Endothelial cell of umbilical vein (primary cell): ENCODE measurements at regions of chr6 and their contacts with region 1.

Region 1: GRCh38 chr6:27608916-27609883 is 136.3 kb upstream of the ZNF184 start:
- DNase-seq: peak; percentile 63
- H3K4me3 ChIP-seq: no peak overlapping the region
- H3K27ac ChIP-seq: no peak overlapping the region
- H3K4me1 ChIP-seq: no peaks in the 10 kb centered on the region
- H3K27me3 ChIP-seq: no peaks in the 10 kb centered on the region
- CTCF ChIP-seq: peak; percentile 74 to 79
- POLR2A ChIP-seq: no peak

Region 2: GRCh38 chr6:27157459-27158315 is 451.5 kb before region 1 on chr6:
- CTCF ChIA-PET with region 1: interaction called, 17 read pairs
- POLR2A ChIA-PET with region 1: no interaction called
- dilution Hi-C with region 1: no loop called
- intact Hi-C with region 1: no loop called
- DNase-seq: peak; percentile 57
- H3K4me3 ChIP-seq: peak overlapping the region; percentile 30 to 64 (median 59)
- H3K27ac ChIP-seq: no peak overlapping the region
- H3K4me1 ChIP-seq: peaks cover 10% of the 10 kb centered on the region
- H3K27me3 ChIP-seq: peaks cover 8 to 11% of the 10 kb centered on the region in 2 experiments
- CTCF ChIP-seq: peak; percentile 42 to 63
- POLR2A ChIP-seq: no peak

Region 3: DNA sequence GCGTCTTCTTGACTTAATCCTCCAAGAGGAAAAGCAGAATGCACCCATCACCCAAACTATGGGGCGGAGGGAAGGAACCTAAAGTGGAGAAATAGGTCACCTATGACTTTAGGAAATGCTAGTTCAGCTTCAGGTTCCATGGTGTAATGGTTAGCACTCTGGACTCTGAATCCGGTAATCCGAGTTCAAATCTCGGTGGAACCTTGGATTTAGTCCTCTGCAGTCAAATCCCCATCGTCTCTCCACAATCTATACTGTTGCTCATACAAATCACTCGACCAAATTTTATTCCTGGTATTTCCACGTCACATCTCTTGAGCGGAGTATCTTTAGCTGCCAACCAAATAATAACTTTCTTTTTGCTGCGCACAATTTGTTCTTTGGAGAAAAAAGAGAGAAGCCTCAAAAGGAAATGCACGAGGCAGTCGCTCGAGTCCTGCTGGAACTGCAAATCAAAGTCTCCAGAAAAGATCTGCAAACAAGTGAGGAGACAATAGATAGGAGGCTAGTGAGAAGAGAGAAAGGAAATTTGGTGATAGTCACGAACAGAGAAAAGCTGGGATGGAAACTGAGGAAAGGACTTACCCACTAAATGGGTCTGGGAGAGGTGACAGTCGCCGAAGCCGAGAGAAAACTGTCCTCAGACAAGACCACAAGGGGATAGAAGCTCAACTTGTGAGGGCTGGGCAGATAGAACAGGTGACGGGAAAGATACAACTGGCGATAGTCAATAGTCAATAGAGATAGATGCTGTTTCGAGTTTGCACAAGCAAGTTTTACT is 313.7 kb before region 1 on chr6:
- CTCF ChIA-PET with region 1: interaction called, 11 read pairs
- POLR2A ChIA-PET with region 1: no interaction called
- dilution Hi-C with region 1: no loop called
- intact Hi-C with region 1: no loop called
- DNase-seq: peak; percentile 37
- H3K4me3 ChIP-seq: peak overlapping the region; percentile 18 to 80 (median 72)
- H3K27ac ChIP-seq: no peak overlapping the region
- H3K4me1 ChIP-seq: peaks cover 17% of the 10 kb centered on the region
- H3K27me3 ChIP-seq: peaks cover 16 to 20% of the 10 kb centered on the region in 2 experiments
- CTCF ChIP-seq: no peak
- POLR2A ChIP-seq: no peak

Region 4: GRCh38 chr6:27503436-27504030 is 105.7 kb before region 1 on chr6:
- CTCF ChIA-PET with region 1: interaction called, 5 read pairs
- POLR2A ChIA-PET with region 1: no interaction called
- dilution Hi-C with region 1: no loop called
- intact Hi-C with region 1: loop called (anchors 5 kb)
- DNase-seq: peak; percentile 83
- H3K4me3 ChIP-seq: peak overlapping the region; percentile 38 to 97 (median 95)
- H3K27ac ChIP-seq: peak overlapping the region; percentile 15
- H3K4me1 ChIP-seq: peaks cover 14% of the 10 kb centered on the region
- H3K27me3 ChIP-seq: peaks cover 5 to 11% of the 10 kb centered on the region in 2 experiments
- CTCF ChIP-seq: no peak
- POLR2A ChIP-seq: no peak

Region 5: GRCh38 chr6:27565821-27566766 is 43.1 kb before region 1 on chr6:
- CTCF ChIA-PET with region 1: no interaction called
- POLR2A ChIA-PET with region 1: no interaction called
- dilution Hi-C with region 1: no loop called
- intact Hi-C with region 1: no loop called
- DNase-seq: no peak
- H3K4me3 ChIP-seq: no peak overlapping the region
- H3K27ac ChIP-seq: no peak overlapping the region
- H3K4me1 ChIP-seq: no peaks in the 10 kb centered on the region
- H3K27me3 ChIP-seq: peaks cover 25 to 38% of the 10 kb centered on the region in 2 experiments
- CTCF ChIP-seq: no peak
- POLR2A ChIP-seq: no peak

Region 6: DNA sequence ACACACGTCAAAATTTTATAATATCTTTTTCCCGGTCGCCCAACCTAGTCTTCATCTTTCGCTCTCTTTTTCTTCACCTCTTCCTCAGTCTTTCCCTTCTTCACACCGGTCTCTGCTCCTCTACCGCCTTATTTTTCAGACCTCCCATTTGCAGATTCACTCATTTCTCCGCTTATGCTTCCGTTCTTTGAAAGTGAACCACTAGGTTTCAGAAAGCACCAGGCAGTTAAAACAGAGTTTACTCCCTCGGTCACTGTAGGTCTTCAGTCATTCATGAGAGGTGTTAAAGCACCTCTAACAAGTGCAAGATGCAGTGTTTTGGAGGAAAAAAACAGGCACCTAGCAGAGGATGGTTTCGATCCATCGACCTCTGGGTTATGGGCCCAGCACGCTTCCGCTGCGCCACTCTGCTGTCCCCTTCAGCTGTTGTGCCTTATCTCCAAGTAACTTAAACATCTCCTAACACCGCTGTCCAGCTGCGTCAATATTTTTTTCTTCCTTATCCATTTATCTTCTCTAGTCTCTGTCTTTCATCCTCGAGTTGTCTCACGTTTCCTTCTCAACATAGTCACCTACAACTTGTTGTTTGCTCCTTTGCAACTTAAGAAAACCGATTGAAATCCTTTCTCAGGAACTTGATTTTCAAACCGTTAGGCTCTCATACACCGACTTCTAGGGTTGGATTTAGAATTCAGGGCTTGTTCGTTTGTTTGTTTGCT is 16.6 kb before region 1 on chr6:
- CTCF ChIA-PET with region 1: interaction called, 13 read pairs
- POLR2A ChIA-PET with region 1: no interaction called
- dilution Hi-C with region 1: no loop called
- intact Hi-C with region 1: no loop called
- DNase-seq: peak; percentile 44
- H3K4me3 ChIP-seq: peak overlapping the region in 2 of 3 experiments; percentile 54 to 69
- H3K27ac ChIP-seq: no peak overlapping the region
- H3K4me1 ChIP-seq: peaks cover 10% of the 10 kb centered on the region
- H3K27me3 ChIP-seq: peaks cover 13 to 14% of the 10 kb centered on the region in 2 experiments
- CTCF ChIP-seq: no peak
- POLR2A ChIP-seq: no peak

Region 7: GRCh38 chr6:27825025-27825793 is 216.0 kb after region 1 on chr6:
- CTCF ChIA-PET with region 1: no interaction called
- POLR2A ChIA-PET with region 1: no interaction called
- dilution Hi-C with region 1: no loop called
- intact Hi-C with region 1: no loop called
- DNase-seq: peak; percentile 49
- H3K4me3 ChIP-seq: peak overlapping the region; percentile 44 to 97 (median 73)
- H3K27ac ChIP-seq: peak overlapping the region; percentile 91
- H3K4me1 ChIP-seq: peaks cover 8% of the 10 kb centered on the region
- H3K27me3 ChIP-seq: no peaks in the 10 kb centered on the region
- CTCF ChIP-seq: no peak
- POLR2A ChIP-seq: no peak

Region 8: DNA sequence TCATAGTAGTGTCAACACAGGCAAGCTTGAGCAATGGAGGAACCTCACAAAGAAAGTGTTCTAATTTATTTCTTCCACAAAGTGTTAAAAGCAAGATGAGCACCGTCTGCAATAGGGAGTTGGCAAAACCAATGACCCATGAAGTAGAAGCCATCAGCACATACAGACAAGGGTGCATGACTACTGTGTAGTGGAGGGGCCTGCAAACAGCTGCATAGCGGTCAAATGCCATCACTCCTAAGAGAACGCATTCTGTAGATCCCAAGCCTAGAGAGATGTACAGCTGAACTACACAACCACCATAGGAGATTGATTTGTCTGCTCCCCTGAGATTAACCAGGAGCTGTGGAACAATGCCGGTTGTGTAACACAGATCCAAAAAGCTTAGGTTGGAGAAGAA is 444.4 kb after region 1 on chr6:
- CTCF ChIA-PET with region 1: no interaction called
- POLR2A ChIA-PET with region 1: no interaction called
- dilution Hi-C with region 1: no loop called
- intact Hi-C with region 1: no loop called
- DNase-seq: no peak
- H3K4me3 ChIP-seq: no peak overlapping the region
- H3K27ac ChIP-seq: no peak overlapping the region
- H3K4me1 ChIP-seq: no peaks in the 10 kb centered on the region
- H3K27me3 ChIP-seq: peaks cover 0 to 2% of the 10 kb centered on the region in 2 experiments
- CTCF ChIP-seq: no peak
- POLR2A ChIP-seq: no peak